AG04450 (cell line): ENCODE measurements at regions of chr1 and their contacts with region 1.

Region 1: DNA sequence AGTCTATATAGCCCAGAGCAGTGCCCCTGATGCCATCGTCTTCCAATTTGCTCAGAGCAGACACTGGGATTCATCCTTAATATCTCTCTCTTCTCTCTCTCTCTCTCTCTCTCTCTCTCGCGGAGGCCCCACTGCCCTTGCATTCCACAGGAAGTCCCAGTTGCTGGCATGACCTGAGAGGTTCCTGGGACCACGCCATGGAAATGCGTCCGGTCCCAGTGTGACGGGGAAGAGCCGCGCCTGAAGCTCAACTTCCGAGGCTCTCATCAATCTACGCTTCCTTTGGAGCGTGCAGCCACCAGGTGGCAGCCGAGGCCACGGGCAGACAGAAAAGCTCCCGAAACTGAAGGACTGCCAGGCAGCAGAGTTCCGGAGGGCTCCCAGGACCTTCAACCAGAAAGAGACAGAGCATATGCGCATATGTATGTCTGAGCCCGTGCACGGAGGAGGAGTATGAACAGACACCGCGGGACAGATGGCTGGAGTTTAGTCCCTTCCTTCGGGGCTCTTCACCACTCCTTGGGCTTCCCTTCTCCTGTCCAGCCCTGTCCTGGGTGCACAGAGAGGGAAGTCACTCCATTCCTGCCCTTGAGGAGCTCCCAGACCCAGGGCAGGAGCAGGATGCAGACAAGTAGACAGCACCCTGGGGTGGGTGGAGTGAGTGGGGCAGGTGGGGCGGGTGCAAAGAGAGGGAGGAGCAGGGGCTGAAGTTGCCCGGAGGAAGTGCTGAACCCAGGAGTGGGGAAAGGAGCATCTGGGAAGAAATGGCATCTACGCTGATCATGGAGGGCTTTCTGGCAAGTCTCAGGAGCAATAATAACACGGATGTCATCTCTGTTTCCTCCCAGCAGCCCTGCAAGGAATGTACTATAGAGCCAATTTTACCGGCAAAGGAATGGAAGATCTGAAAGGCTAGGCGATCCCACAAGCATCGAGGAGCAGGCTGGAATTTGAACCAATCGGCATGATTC is 10.5 kb downstream of the PDZK1IP1 start:
- DNase-seq: peak; percentile 83
- H3K4me3 ChIP-seq: peak overlapping the region; percentile 61
- H3K27ac ChIP-seq: no peak overlapping the region
- H3K27me3 ChIP-seq: peaks cover 8% of the 10 kb centered on the region
- CTCF ChIP-seq: peak; percentile 96

Region 2: GRCh38 chr1:46708121-46708520 is 471.2 kb before region 1 on chr1:
- CTCF ChIA-PET with region 1: interaction called, 14 read pairs
- POLR2A ChIA-PET with region 1: no interaction called
- DNase-seq: no peak
- H3K4me3 ChIP-seq: no peak overlapping the region
- H3K27ac ChIP-seq: no peak overlapping the region
- H3K27me3 ChIP-seq: no peaks in the 10 kb centered on the region
- CTCF ChIP-seq: no peak

Region 3: GRCh38 chr1:47104816-47105215 is 74.5 kb before region 1 on chr1:
- CTCF ChIA-PET with region 1: no interaction called
- POLR2A ChIA-PET with region 1: no interaction called
- DNase-seq: no peak
- H3K4me3 ChIP-seq: no peak overlapping the region
- H3K27ac ChIP-seq: no peak overlapping the region
- H3K27me3 ChIP-seq: no peaks in the 10 kb centered on the region
- CTCF ChIP-seq: no peak

Region 4: GRCh38 chr1:47201179-47201578 is 21.9 kb after region 1 on chr1:
- CTCF ChIA-PET with region 1: interaction called, 127 read pairs
- POLR2A ChIA-PET with region 1: no interaction called
- DNase-seq: no peak
- H3K4me3 ChIP-seq: no peak overlapping the region
- H3K27ac ChIP-seq: no peak overlapping the region
- H3K27me3 ChIP-seq: peaks cover 17% of the 10 kb centered on the region
- CTCF ChIP-seq: no peak

Region 5: GRCh38 chr1:47262787-47263413 is 83.6 kb after region 1 on chr1:
- CTCF ChIA-PET with region 1: interaction called, 118 read pairs
- POLR2A ChIA-PET with region 1: no interaction called
- DNase-seq: no peak
- H3K4me3 ChIP-seq: no peak overlapping the region
- H3K27ac ChIP-seq: no peak overlapping the region
- H3K27me3 ChIP-seq: no peaks in the 10 kb centered on the region
- CTCF ChIP-seq: peak; percentile 75

Region 6: GRCh38 chr1:47388891-47389238 is 209.6 kb after region 1 on chr1:
- CTCF ChIA-PET with region 1: interaction called, 14 read pairs
- POLR2A ChIA-PET with region 1: no interaction called
- DNase-seq: no peak
- H3K4me3 ChIP-seq: no peak overlapping the region
- H3K27ac ChIP-seq: no peak overlapping the region
- H3K27me3 ChIP-seq: no peaks in the 10 kb centered on the region
- CTCF ChIP-seq: peak; percentile 92

Region 7: DNA sequence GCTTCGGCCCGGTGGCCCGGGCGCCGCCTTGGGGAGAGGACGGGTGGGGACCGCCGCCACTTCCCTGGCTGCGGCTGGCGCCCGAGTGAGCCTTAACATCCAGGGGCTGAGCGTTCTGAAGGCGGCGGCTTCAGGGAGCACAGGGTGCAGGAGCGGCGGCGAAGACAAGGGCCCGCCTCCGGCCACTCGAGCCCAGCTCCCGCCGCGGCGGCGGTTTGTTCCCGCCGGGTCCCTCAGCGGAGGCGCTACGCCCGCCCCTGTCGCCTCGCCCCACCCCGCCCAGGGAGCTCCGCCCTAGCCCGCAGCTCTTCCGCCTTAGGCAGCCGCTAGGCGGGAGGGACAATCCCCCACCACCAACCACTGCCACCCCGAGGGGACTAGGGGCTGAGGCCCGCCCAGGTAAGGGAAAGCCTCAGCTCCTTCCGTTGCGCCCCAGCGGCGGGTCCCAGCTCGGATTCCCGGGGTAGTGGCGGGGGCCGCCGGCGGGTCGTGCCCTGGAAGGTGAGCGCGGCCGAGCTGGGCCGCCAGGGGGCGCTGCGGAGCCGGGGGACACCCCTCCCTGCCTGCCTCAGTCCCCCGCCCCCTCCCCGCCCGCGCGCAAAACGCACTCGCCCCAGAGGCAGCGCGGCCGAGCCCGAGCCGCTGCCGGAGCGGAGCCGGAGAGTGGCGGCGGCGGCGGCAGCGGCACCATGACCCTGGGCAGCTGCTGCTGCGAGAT is 258.3 kb after region 1 on chr1 and contains the start of gene FOXD2:
- CTCF ChIA-PET with region 1: interaction called, 53 read pairs
- POLR2A ChIA-PET with region 1: no interaction called
- DNase-seq: peak; percentile 24
- H3K4me3 ChIP-seq: peak within 1 kb of the TSS; percentile 79
- H3K27ac ChIP-seq: no peak within 1 kb of the TSS
- H3K27me3 ChIP-seq: peaks cover 35% of the 10 kb centered on the region
- CTCF ChIP-seq: peak; percentile 68
- polyA plus RNA-seq, gene FOXD2: 0.01 TPM in 1 of 2 replicates, not detected in the other

Region 8: GRCh38 chr1:47725992-47726855 is 546.9 kb after region 1 on chr1:
- CTCF ChIA-PET with region 1: interaction called, 56 read pairs
- POLR2A ChIA-PET with region 1: interaction called, 13 read pairs
- DNase-seq: peak; percentile 26
- H3K4me3 ChIP-seq: peak overlapping the region; percentile 25; the same call in 1 of the 2 replicates
- H3K27ac ChIP-seq: no peak overlapping the region
- H3K27me3 ChIP-seq: peaks cover 24% of the 10 kb centered on the region
- CTCF ChIP-seq: peak; percentile 89